ENCODE measurements at regions of chr6 and their contacts with region 1.

Region 1: GRCh38 chr6:36771145-36771544 is 68.1 kb downstream of the CPNE5 start:
- DNase-seq: no peak
- ATAC-seq: no peak
- H3K4me3 ChIP-seq: no peak overlapping the region
- H3K4me3 Mint-ChIP-seq: peak overlapping the region in 1 of 3 donors; percentile 79
- H3K27ac ChIP-seq: peak overlapping the region; percentile 58
- H3K27ac Mint-ChIP-seq: peak overlapping the region; percentile 88 to 93
- H3K4me1 ChIP-seq: peaks cover 18 to 52% of the 10 kb centered on the region in 2 experiments
- H3K4me1 Mint-ChIP-seq: peaks cover 42 to 51% (median 48%) of the 10 kb centered on the region in 3 donors
- H3K27me3 ChIP-seq: peaks cover 0 to under 1% of the 10 kb centered on the region in 2 experiments
- H3K27me3 Mint-ChIP-seq: no peaks in the 10 kb centered on the region

Region 2: GRCh38 chr6:36682328-36683144 is 88.6 kb before region 1 on chr6:
- CTCF ChIA-PET with region 1: no interaction called
- POLR2A ChIA-PET with region 1: interaction called in 1 of 2 experiments, 13 read pairs
- DNase-seq: peak in 34 of 35 experiments; percentile 24 to 86 (median 63)
- ATAC-seq: peak in 3 of 4 experiments; percentile 6 to 68 (median 12)
- H3K4me3 ChIP-seq: no peak overlapping the region
- H3K4me3 Mint-ChIP-seq: peak overlapping the region in 2 of 3 donors; percentile 6 to 34
- H3K27ac ChIP-seq: peak overlapping the region; percentile 54
- H3K27ac Mint-ChIP-seq: peak overlapping the region; percentile 73 to 77
- H3K4me1 ChIP-seq: peaks cover 14 to 63% of the 10 kb centered on the region in 2 experiments
- H3K4me1 Mint-ChIP-seq: peaks cover 38 to 46% (median 39%) of the 10 kb centered on the region in 3 donors
- H3K27me3 ChIP-seq: peaks cover 0 to 41% of the 10 kb centered on the region in 2 experiments
- H3K27me3 Mint-ChIP-seq: no peaks in the 10 kb centered on the region

Region 3: GRCh38 chr6:36743538-36744303 is 27.4 kb before region 1 on chr6:
- CTCF ChIA-PET with region 1: no interaction called
- POLR2A ChIA-PET with region 1: no interaction called
- DNase-seq: no peak
- ATAC-seq: peak in 1 of 4 experiments; percentile 9
- H3K4me3 ChIP-seq: no peak overlapping the region
- H3K4me3 Mint-ChIP-seq: no peak overlapping the region
- H3K27ac ChIP-seq: no peak overlapping the region
- H3K27ac Mint-ChIP-seq: no peak overlapping the region
- H3K4me1 ChIP-seq: peaks cover 0 to 16% of the 10 kb centered on the region in 2 experiments
- H3K4me1 Mint-ChIP-seq: peaks cover 0 to 27% (median 0%) of the 10 kb centered on the region in 3 donors
- H3K27me3 ChIP-seq: peaks cover 0 to 8% of the 10 kb centered on the region in 2 experiments
- H3K27me3 Mint-ChIP-seq: no peaks in the 10 kb centered on the region

Measured in T-cell (primary cell).